Activated B cell treated with CpG ODN at 0.5 μM for 24 hours (primary cell): ENCODE measurements at regions of chr19 and their contacts with region 1.

Region 1: DNA sequence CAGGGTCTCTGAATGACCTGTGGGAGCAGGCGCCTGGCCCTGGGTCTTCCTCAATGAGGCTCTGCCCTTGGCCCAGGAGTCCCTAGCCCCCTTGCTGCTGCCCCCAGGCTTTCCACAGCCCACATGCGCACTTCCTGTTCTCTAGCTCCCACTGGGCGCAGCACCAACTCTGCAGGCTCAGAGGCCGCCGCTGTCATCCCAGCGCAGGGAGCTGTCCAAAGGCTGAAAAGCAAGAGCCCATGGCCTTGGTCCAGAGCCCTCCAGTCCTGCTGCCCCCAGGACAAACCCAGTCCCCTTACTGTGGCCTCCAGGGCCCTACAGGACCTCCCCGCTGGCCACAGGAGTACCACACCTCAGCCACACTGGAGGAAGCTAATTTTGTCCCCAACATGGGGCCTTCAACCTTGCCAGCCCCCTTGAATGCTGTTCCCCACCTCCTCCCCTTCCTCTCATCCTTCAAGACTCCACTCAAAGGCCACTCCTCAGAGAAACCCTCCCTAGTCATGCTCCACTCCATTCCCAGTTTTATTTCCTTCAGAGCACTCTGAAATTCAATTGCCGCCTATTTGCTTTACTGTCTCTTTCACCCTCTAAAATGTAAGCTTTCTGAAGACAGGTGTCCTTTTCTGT is 8.0 kb upstream of the POU2F2 start:
- DNase-seq: no peak
- ATAC-seq: peak; percentile 53
- H3K4me3 Mint-ChIP-seq: no peak overlapping the region
- H3K27ac Mint-ChIP-seq: no peak overlapping the region
- H3K4me1 Mint-ChIP-seq: peaks cover 17% of the 10 kb centered on the region
- H3K27me3 Mint-ChIP-seq: no peaks in the 10 kb centered on the region
- CTCF ChIP-seq: no peak

Region 2: GRCh38 chr19:42199440-42200115 is 59.3 kb after region 1 on chr19:
- CTCF ChIA-PET with region 1: no interaction called
- POLR2A ChIA-PET with region 1: interaction called, 19 read pairs
- intact Hi-C with region 1: no loop called
- DNase-seq: peak; percentile 47
- ATAC-seq: peak; percentile 44
- H3K4me3 Mint-ChIP-seq: peak overlapping the region; percentile 68
- H3K27ac Mint-ChIP-seq: peak overlapping the region; percentile 93
- H3K4me1 Mint-ChIP-seq: peaks cover 87% of the 10 kb centered on the region
- H3K27me3 Mint-ChIP-seq: no peaks in the 10 kb centered on the region
- CTCF ChIP-seq: no peak